ENCODE measurements at regions of chr11 and their contacts with region 1.

Region 1: DNA sequence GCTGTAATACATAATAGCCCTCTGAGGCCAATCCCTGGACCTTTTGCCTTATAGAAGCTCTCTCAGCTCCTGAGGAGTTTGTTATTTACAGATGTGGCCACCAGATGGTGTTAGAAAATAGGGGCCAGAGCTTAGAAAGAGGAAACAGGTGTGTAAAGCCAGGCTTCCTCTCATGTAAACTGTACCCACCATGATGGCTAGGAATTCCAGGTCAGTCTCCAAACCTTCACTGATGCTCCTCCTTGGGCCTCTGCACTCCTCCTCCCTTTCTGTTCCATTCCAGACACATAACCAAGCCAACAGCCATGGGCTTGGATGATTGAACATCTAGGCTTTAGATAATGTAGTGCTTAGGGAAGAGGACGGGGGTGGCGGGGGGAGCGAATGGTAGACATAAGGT is 39.7 kb downstream of the USP35 start:
- DNase-seq: peak; percentile 51 to 60
- ATAC-seq: peak; percentile 87 to 92
- H3K4me3 ChIP-seq: no peak overlapping the region
- H3K27ac ChIP-seq: no peak overlapping the region
- H3K4me1 ChIP-seq: no peaks in the 10 kb centered on the region
- CTCF ChIP-seq: peak; percentile 63
- EP300 ChIP-seq: no peak
- POLR2A ChIP-seq: no peak
- RAD21 ChIP-seq: peak; percentile 74 to 77

Region 2: GRCh38 chr11:78416305-78417178 is 188.1 kb after region 1 on chr11:
- CTCF ChIA-PET with region 1: interaction called, 6 read pairs
- POLR2A ChIA-PET with region 1: interaction called, 10 read pairs
- DNase-seq: peak; percentile 81 to 88
- ATAC-seq: peak; percentile 67 to 83
- H3K4me3 ChIP-seq: peak overlapping the region; percentile 86
- H3K27ac ChIP-seq: peak overlapping the region; percentile 79 to 95
- H3K4me1 ChIP-seq: peaks cover 32% of the 10 kb centered on the region
- CTCF ChIP-seq: peak; percentile 55
- EP300 ChIP-seq: no peak
- POLR2A ChIP-seq: no peak; the same call in 1 of the 2 replicates
- RAD21 ChIP-seq: peak; percentile 26 to 41; a peak in 2 of 5 replicates

Measured in A549 (cell line).